ENCODE measurements at regions of chr5 and their contacts with region 1.

Region 1: DNA sequence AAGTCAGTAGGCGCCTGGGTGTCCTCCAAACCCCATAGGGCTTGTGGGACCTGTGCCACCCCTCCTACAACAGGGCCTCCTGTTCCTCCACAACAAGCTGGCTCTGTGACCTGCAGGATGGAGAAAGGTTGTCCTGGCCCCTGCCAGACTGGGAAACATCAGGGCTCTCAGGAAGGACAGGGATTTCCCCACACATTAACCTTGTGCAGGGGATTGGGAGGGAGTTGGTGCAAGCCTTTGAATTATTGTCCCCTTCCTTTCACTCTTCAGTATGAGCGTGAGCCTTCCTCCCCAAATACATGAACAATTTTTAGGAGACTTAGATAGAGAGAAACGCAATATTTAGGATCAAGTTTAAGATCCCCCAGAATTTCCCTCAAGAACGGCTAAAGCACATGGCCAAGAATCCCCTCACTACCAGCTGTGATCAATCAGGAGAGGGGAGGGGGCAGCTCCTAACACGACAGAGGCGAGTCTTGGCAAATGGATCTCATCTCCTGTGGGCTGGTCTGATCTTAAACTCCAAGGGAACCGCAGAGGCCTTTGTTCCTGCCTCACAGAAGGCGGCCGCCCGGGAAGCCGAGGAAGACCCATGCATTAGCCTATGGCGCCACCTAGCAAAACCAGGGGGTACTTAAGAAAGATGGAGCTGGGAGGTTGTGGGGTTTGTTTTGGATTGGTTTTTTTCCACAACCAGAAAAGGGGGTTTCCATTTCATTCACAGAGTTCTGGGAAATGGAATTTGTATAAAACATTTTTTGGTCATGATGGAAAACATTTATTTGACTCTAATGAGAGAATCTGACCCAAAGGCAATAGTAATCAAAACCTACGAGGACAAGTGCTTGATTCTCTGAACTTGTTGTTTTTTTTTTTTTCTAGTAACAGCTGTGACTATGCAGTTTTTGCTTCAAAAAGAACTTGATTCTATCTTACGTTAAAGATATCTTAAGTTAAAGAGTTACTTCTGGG is 36.1 kb upstream of the OSMR start:
- DNase-seq: peak; percentile 60
- H3K4me3 ChIP-seq: no peak overlapping the region
- CTCF ChIP-seq: peak; percentile 88

Region 2: DNA sequence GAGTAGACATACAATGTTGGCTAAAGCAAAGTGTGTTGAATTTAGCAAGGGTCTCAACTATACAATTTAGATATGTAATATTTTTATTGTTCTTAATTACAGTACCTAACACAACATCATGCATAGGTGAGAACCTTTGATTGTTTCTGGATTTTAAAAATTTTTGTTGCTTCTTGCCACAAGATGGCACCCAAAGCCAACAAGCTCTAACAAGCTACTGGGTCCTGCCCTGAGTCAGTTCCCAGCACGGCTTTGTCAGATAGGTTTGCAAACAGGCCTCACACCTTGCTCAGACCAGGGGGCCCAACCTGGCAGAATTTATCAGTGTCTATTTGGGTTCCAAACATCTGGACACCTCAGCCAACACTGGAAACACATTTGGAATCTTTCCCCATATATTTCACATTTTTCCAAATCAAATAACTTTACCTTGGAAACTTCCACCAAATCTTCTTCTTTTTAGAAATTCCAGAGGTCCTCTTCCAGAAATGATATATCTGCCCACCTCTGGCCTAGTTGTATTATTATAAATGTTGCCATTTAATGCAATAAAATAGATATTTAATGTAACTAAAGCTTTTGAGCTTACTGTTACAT is 600.8 kb before region 1 on chr5:
- CTCF ChIA-PET with region 1: interaction called, 15 read pairs
- POLR2A ChIA-PET with region 1: no interaction called
- DNase-seq: no peak
- H3K4me3 ChIP-seq: no peak overlapping the region
- CTCF ChIP-seq: peak; percentile 25

Region 3: GRCh38 chr5:38382898-38383297 is 426.8 kb before region 1 on chr5:
- CTCF ChIA-PET with region 1: interaction called, 151 read pairs
- POLR2A ChIA-PET with region 1: interaction called, 3 read pairs
- DNase-seq: no peak
- H3K4me3 ChIP-seq: no peak overlapping the region
- CTCF ChIP-seq: peak; percentile 89

Region 4: DNA sequence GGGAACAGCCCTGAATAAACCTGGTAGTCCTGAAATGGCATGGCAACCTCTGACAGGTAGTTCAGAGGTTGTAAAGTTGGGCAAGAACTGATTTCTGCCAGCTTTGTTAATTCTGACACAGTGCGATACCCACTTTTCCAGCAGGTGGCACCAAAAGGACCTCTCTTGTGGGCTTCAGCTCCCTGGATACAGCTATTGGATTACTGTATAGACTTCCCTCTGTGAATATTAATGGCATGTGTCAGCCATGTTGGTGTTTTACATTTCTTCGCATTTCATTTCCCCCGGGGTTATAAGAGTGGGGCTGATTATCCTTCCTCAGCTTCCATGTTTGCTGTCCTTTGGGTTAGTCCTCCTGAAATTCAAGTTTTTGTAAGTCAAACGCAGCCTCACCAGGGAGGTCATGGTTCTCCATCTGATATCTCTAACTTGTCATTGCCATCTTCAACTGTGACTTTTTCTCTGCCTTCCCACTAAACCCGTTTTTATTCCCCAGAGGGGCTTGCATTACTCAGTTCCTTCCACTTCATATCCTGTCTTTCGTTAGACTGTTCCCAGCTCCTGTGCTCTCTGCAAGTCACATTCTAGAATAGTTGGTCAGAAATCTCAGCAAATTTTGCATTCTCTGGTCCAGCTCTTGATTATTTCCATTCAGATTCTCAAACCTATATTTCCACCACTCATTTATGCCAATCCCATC is 388.8 kb before region 1 on chr5:
- CTCF ChIA-PET with region 1: interaction called, 165 read pairs
- POLR2A ChIA-PET with region 1: no interaction called
- DNase-seq: no peak
- H3K4me3 ChIP-seq: no peak overlapping the region
- CTCF ChIP-seq: peak; percentile 78

Region 5: GRCh38 chr5:38453506-38453905 is 356.2 kb before region 1 on chr5:
- CTCF ChIA-PET with region 1: interaction called, 59 read pairs
- POLR2A ChIA-PET with region 1: interaction called, 5 read pairs
- DNase-seq: no peak
- H3K4me3 ChIP-seq: no peak overlapping the region
- CTCF ChIP-seq: no peak

Region 6: DNA sequence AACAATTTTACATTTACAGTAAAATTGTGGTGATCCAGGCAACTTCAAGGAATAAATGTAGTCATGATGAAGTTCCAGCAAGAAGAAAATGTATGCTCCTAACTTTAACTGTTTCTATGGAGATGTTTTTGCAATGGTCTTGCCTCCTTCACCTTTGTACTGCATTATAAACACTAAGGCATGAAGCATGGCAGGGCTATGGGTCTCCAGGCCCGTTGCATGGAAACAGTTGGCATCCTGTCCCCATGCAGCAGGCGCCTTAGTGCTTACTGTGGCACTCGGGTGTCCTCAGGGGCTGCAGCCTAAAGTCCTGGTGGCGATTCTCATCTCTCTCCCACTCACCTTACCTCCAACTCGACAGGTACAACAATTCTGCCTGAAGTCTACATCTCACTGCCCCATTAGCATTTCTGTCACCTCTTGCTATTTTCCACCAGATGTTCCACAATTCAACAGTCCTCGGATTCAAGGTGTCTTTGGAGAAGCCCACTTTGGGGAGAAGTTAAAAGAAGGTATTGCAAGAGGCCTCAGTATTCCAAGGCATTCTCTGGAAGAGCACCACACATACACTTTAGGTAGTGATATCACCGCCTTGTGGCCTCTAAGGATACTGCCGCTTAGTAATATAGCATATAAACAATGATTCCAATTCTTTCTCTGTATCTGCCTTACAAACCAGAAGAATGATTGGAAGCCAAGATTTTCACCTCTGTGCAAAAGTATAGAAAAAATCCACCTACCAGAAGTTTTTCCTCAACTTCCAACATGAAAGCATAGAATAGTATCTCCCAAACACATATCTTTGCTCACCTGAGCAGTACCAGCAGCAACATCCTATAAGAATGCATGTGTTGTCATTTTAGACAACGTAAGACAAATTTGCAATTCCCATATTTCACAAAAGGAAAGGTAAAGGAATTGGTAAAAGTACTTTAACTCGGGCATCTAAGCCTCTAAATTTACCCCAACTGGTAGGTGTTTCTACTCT is 258.4 kb before region 1 on chr5:
- CTCF ChIA-PET with region 1: interaction called, 43 read pairs
- POLR2A ChIA-PET with region 1: no interaction called
- DNase-seq: no peak
- H3K4me3 ChIP-seq: no peak overlapping the region
- CTCF ChIP-seq: peak; percentile 71

Region 7: GRCh38 chr5:38780950-38781349 is 28.7 kb before region 1 on chr5:
- CTCF ChIA-PET with region 1: interaction called, 21 read pairs
- POLR2A ChIA-PET with region 1: no interaction called
- DNase-seq: no peak
- H3K4me3 ChIP-seq: no peak overlapping the region
- CTCF ChIP-seq: peak; percentile 33

Region 8: DNA sequence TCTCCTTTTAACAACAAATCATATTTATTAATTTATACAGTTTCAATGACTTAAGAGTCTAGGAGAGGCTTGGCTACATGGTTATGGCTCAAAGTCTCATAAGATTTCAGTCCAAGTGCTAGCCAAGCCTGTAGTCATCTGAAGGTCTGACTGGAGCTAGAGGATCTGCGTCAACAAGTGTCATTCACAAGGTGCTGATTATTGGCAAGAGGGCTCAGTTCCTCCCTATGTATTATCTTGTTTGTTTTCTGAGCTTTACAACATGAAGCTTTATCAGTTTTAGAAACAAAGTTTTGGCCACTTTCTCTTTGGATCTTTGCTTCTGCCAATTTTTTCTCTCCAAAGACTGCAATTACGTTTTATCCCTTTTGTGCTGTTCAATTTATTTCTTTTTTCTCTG is 169.9 kb after region 1 on chr5:
- CTCF ChIA-PET with region 1: no interaction called
- POLR2A ChIA-PET with region 1: no interaction called
- DNase-seq: no peak
- H3K4me3 ChIP-seq: no peak overlapping the region
- CTCF ChIP-seq: no peak

Region 9: DNA sequence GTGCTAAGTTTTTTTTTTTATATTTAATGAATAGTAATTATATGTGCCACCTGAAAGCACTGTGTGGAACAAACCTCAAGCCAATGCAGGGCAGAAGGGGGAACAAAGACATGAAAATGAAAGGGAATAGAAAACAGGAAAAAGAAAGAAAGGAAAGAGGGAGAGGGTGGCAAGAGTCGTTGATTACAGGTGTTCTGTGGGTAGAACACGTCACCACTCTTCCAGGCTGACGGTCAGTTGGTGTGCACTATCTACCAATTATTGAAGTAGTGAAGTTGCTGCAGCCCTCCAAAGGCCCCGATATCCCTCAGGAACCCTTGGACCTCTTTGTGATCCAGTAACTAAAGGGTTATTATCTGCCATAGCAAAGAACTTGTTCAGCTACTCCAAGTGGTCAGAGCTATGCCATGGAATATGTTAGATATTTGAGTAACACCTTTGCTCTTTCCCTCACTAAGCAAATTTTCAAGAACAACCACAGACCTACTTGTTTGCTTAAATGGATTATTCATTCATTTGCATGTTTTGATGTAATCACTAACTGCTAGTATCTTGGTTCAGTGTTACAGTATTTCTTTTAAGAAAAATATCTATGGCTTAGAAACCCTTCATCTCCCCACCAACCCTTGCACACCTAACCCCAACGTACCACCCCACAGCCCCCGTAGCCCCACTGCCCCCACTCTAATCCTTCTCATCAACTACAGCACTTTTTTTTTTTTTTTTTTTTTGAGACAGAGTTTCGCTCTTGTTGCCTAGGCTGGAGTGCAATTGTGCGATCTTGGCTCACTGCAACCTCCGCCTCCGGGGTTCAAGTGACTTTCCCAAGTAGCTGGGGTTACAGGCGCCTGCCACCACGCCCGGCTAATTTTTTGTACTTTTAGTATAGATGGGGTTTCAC is 378.4 kb after region 1 on chr5:
- CTCF ChIA-PET with region 1: no interaction called
- POLR2A ChIA-PET with region 1: no interaction called
- DNase-seq: no peak
- H3K4me3 ChIP-seq: no peak overlapping the region
- CTCF ChIP-seq: no peak